ENCODE measurements at regions of chr15 and their contacts with region 1.

Region 1: DNA sequence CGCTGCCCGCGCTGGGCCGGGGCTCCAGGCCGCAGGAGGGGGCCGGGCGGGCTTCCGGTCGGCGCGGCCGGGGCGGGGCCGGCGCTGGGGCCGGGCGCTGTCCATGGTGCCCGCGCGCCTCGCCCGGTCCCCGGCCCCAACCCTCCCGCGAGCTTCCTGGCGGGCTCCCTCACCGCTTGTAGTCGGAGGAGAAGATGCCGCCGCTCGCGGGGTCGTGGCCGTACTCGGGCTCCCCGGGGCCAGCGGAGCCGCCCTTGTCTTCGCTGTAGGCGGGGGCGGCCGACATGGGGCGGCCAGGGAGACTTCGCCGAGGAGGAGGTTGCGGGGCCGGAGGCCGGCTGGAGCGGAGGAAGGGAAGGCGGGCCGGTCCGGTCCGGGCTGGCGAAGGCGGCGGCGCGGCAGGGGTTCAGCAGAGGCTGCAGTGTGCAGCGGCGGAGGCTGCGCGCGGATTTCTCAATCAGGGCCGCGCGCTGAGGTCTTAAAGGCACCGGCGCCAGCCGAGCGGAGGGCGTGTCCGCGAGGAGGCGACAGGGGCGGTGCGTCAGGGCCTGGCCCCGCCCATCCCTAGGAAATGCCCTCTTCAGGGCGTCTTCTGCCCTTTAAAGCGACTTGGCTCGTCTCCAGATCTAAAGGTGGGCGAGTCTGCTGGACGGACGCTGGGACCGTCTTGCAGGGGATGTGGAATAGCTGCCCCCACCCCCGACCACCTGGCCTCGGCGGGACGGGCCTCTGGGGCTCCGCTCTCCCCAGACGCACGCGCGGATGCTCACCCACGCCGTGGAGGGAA is at the start of gene AP3B2:
- DNase-seq: peak; percentile 62 to 76
- H3K4me3 ChIP-seq: peak within 1 kb of the TSS; percentile 60
- H3K4me3 Mint-ChIP-seq: no peak within 1 kb of the TSS
- H3K27ac Mint-ChIP-seq: no peak within 1 kb of the TSS
- H3K4me1 ChIP-seq: no peaks in the 10 kb centered on the region
- H3K4me1 Mint-ChIP-seq: no peaks in the 10 kb centered on the region
- H3K27me3 ChIP-seq: no peaks in the 10 kb centered on the region
- H3K27me3 Mint-ChIP-seq: no peaks in the 10 kb centered on the region
- CTCF ChIP-seq: no peak
- total RNA-seq, gene AP3B2: 0.37 and 0.82 TPM in 2 replicates

Region 2: DNA sequence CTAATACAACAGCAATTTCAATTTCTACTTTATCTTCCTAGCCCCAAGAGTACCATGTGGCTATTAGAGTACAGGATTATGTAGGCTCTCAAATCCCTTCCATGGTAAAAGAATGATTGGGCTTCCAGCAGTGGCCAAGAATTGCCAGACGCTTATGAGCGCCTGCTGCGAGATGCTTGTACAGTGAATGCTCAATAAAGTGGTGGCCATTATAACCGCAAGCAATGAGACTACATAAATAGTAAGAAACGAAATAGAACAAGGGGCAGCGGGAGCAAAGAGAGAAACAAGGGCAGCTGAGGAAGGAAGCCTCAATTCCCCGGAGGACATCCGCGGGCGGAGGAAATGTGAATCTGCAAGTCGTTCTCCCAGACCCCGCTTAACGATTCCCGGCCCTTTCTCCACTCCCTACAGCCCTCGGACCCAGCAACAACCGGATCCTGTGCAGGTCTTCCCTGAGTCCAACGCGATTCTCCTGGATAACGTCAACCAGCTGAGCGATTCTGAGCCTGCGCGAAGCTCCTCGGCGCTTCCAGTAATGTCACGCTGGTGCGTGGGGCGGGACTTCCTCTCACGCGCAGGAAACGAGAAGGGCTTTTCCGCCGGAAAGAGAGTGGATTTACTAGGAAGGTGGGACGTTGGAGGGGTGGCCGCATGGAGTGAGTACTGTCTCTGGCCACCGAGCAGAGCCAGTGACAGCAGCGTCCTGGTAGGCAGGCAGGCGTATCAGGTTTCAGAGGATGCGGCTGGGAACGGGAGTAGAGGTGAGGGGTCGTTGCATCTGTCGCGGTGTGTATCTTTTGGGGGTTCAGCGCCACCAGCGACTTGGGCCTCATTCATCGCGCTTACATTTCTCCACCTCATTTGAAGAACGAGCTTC is 40.6 kb after region 1 on chr15:
- CTCF ChIA-PET with region 1: interaction called, 3 read pairs
- POLR2A ChIA-PET with region 1: no interaction called
- intact Hi-C with region 1: loop called (anchors 2 kb)
- DNase-seq: peak; percentile 88 to 91
- H3K4me3 ChIP-seq: peak overlapping the region; percentile 61
- H3K4me3 Mint-ChIP-seq: peak overlapping the region; percentile 94
- H3K27ac Mint-ChIP-seq: peak overlapping the region; percentile 93
- H3K4me1 ChIP-seq: peaks cover 6% of the 10 kb centered on the region; the same call in 1 of the 2 replicates
- H3K4me1 Mint-ChIP-seq: no peaks in the 10 kb centered on the region
- H3K27me3 ChIP-seq: no peaks in the 10 kb centered on the region
- H3K27me3 Mint-ChIP-seq: no peaks in the 10 kb centered on the region
- CTCF ChIP-seq: no peak

Region 3: GRCh38 chr15:82952158-82953081 is 242.8 kb after region 1 on chr15 and contains the start of gene HOMER2:
- CTCF ChIA-PET with region 1: no interaction called
- POLR2A ChIA-PET with region 1: no interaction called
- intact Hi-C with region 1: no loop called
- DNase-seq: peak in 1 of 2 experiments; percentile 18
- H3K4me3 ChIP-seq: peak within 1 kb of the TSS; percentile 38
- H3K4me3 Mint-ChIP-seq: peak within 1 kb of the TSS; percentile 42
- H3K27ac Mint-ChIP-seq: no peak within 1 kb of the TSS
- H3K4me1 ChIP-seq: no peaks in the 10 kb centered on the region
- H3K4me1 Mint-ChIP-seq: no peaks in the 10 kb centered on the region
- H3K27me3 ChIP-seq: no peaks in the 10 kb centered on the region; the same call in 1 of the 2 replicates
- H3K27me3 Mint-ChIP-seq: peaks cover 3% of the 10 kb centered on the region
- CTCF ChIP-seq: no peak
- total RNA-seq, gene HOMER2: 5.0 and 5.5 TPM in 2 replicates